ENCODE measurements at regions of chr7 and their contacts with region 1.

Region 1: DNA sequence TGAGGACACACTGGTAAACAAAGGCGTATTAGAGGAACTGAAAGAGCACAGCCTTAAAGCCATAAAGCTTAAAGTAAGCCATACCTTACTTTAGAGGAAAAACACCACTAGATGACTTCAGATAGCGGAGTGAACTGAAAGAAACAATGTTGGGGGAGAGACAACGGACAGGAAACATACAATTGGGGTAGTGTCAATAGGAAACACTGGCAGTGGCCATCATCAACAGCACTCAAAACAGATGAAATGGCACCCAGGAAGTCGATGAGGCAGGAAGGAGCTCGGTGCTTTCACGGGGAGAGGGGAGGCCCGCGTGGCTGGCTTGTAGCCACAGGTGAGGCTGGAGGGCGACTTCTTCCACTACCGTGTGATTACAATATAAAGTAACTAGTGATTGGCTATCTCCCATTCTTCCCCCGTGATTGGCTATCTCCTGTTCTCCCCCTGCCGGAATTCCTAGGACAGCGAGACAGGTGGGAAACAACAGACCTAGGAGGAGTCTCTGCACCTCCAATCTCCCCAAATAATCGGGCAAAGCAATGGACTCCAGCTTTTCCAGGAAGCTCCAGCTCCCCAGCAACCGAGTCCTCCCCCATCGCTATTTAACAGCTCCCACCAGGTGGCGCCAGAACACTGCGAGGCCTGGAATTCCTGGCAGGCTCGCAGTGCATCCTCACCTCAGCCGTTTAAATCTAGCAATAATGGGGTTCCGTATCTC is 2.4 kb upstream of the TAS2R38 start:
- DNase-seq: peak; percentile 50
- ATAC-seq: peak; percentile 97
- H3K4me3 ChIP-seq: peak overlapping the region in 1 of 3 experiments; percentile 9; a peak in 1 of 6 replicates
- H3K27ac ChIP-seq: no peak overlapping the region
- H3K4me1 ChIP-seq: no peaks in the 10 kb centered on the region
- H3K27me3 ChIP-seq: no peaks in the 10 kb centered on the region
- CTCF ChIP-seq: peak; percentile 92
- EP300 ChIP-seq: no peak
- POLR2A ChIP-seq: no peak
- RAD21 ChIP-seq: peak; percentile 82

Region 2: GRCh38 chr7:142188846-142189245 is 212.9 kb after region 1 on chr7:
- CTCF ChIA-PET with region 1: interaction called, 38 read pairs
- POLR2A ChIA-PET with region 1: no interaction called
- in situ Hi-C with region 1: loop called (anchors 5 kb)
- intact Hi-C with region 1: loop called (anchors 1 kb)
- DNase-seq: peak; percentile 5
- ATAC-seq: no peak
- H3K4me3 ChIP-seq: no peak overlapping the region
- H3K27ac ChIP-seq: no peak overlapping the region
- H3K4me1 ChIP-seq: no peaks in the 10 kb centered on the region
- H3K27me3 ChIP-seq: no peaks in the 10 kb centered on the region
- CTCF ChIP-seq: peak; percentile 42
- EP300 ChIP-seq: no peak
- POLR2A ChIP-seq: no peak
- RAD21 ChIP-seq: no peak